B cell (primary cell): ENCODE measurements at regions of chr7 and their contacts with region 1.

Region 1: GRCh38 chr7:41940760-41941343 is 238.0 kb upstream of the INHBA start:
- DNase-seq: peak; percentile 80
- ATAC-seq: peak; percentile 73
- H3K4me3 ChIP-seq: no peak overlapping the region
- H3K4me3 Mint-ChIP-seq: peak overlapping the region; percentile 68
- H3K27ac ChIP-seq: no peak overlapping the region
- H3K27ac Mint-ChIP-seq: no peak overlapping the region
- H3K4me1 ChIP-seq: peaks cover 17 to 24% of the 10 kb centered on the region in 2 donors
- H3K4me1 Mint-ChIP-seq: peaks cover 27% of the 10 kb centered on the region
- H3K27me3 ChIP-seq: peaks cover 0 to 4% (median 0%) of the 10 kb centered on the region in 4 experiments
- H3K27me3 Mint-ChIP-seq: peaks cover 9% of the 10 kb centered on the region
- CTCF ChIP-seq: peak; percentile 91

Region 2: DNA sequence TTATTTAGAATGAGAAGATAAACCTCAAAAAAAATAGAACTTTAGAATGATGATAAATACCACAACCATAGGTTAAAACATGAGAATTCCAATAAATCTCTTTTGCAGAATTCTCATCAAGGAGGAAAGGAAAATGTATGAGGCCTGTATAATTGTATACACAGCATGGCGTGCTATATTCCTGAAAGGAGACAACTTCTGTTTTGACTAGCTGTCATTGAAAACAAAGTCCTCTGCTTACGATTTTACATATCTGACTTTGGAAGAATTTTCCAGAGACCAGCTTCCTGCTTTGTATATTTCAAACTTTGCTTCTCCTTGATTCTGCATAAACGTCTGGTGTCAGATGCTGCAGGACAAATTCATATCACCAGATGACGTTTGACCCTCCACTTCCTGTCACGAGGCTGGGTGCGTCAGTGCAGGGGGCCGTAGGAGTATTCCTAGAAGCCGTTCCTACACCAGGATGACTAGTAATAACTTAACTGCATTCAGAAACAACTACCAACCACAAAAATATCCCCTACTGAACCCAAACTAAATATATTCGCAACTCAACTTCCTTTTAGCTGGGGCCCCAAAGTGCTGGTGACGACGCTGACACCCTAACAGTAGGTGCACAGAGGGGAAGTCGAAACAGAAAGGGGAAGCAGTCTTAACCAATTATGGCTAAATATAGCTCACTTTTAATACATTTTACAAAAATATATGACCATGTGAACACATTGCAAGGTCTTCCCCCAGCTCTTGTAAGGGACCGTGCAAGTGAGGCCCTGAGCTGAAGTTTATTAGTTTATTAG is 59.3 kb before region 1 on chr7:
- CTCF ChIA-PET with region 1: interaction called, 13 read pairs
- POLR2A ChIA-PET with region 1: no interaction called
- intact Hi-C with region 1: loop called (anchors 1 kb)
- DNase-seq: peak; percentile 96
- ATAC-seq: peak; percentile 89
- H3K4me3 ChIP-seq: peak overlapping the region in 1 of 5 experiments; percentile 41
- H3K4me3 Mint-ChIP-seq: peak overlapping the region; percentile 84
- H3K27ac ChIP-seq: peak overlapping the region; percentile 87 to 91
- H3K27ac Mint-ChIP-seq: peak overlapping the region; percentile 93
- H3K4me1 ChIP-seq: peaks cover 57 to 63% of the 10 kb centered on the region in 2 donors
- H3K4me1 Mint-ChIP-seq: peaks cover 71% of the 10 kb centered on the region
- H3K27me3 ChIP-seq: no peaks in the 10 kb centered on the region
- H3K27me3 Mint-ChIP-seq: no peaks in the 10 kb centered on the region
- CTCF ChIP-seq: no peak

Region 3: GRCh38 chr7:41930538-41931262 is 10.2 kb before region 1 on chr7:
- CTCF ChIA-PET with region 1: interaction called, 54 read pairs
- POLR2A ChIA-PET with region 1: no interaction called
- intact Hi-C with region 1: no loop called
- DNase-seq: no peak
- ATAC-seq: no peak
- H3K4me3 ChIP-seq: no peak overlapping the region
- H3K4me3 Mint-ChIP-seq: no peak overlapping the region
- H3K27ac ChIP-seq: no peak overlapping the region
- H3K27ac Mint-ChIP-seq: no peak overlapping the region
- H3K4me1 ChIP-seq: peaks cover 10 to 15% of the 10 kb centered on the region in 2 donors
- H3K4me1 Mint-ChIP-seq: peaks cover 22% of the 10 kb centered on the region
- H3K27me3 ChIP-seq: no peaks in the 10 kb centered on the region
- H3K27me3 Mint-ChIP-seq: peaks cover 6% of the 10 kb centered on the region
- CTCF ChIP-seq: no peak

Region 4: GRCh38 chr7:41977151-41977651 is 36.3 kb after region 1 on chr7:
- CTCF ChIA-PET with region 1: interaction called, 11 read pairs
- POLR2A ChIA-PET with region 1: no interaction called
- intact Hi-C with region 1: no loop called
- DNase-seq: peak; percentile 21
- ATAC-seq: no peak
- H3K4me3 ChIP-seq: no peak overlapping the region
- H3K4me3 Mint-ChIP-seq: no peak overlapping the region
- H3K27ac ChIP-seq: no peak overlapping the region
- H3K27ac Mint-ChIP-seq: no peak overlapping the region
- H3K4me1 ChIP-seq: no peaks in the 10 kb centered on the region
- H3K4me1 Mint-ChIP-seq: no peaks in the 10 kb centered on the region
- H3K27me3 ChIP-seq: peaks cover 0 to 4% (median 2%) of the 10 kb centered on the region in 4 experiments
- H3K27me3 Mint-ChIP-seq: peaks cover 13% of the 10 kb centered on the region
- CTCF ChIP-seq: peak; percentile 35

Region 5: DNA sequence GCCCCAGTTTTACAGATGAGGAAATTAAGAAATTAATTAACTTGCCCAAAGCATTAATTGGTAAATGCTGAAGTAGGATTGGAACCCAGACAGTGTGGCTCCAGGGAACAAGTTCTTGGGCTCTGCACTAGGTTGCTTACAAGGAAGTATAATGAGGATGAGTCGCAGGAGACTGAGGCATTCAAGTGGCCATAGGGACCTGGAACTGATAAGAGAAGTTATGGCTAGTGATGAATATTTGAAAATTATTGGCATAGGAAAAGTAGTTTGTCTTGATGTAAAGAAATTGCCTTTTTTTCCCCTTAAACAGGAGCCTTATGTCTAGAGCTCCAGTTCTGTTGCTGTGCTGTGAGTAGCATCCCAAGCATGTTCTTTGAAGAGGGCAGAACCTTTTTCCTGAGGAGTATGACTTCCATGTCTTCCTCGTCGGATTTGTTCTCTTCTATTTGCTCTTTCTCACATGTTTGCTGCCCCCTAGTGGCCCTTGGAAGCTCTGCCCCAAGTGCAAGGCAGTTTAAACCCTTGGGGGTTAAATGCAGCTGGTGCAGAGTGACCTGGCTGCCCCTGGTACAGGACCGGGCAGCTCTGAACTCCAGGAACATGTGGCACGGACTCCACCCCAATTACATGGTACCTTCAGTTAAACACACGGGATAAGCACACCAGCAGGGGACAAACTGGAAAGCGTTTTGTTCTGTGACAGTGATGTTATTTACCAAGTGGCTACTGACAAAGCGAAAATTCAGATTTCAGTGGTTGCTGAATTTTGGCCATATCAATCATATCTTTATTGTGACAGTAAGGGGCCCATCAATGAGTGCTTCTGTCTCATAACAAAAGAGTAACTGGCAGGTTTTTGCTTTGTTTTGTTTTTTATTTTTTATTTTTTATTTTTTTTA is 1320.4 kb after region 1 on chr7:
- CTCF ChIA-PET with region 1: interaction called, 7 read pairs
- POLR2A ChIA-PET with region 1: no interaction called
- intact Hi-C with region 1: loop called (anchors 2 kb)
- DNase-seq: peak; percentile 70
- ATAC-seq: peak; percentile 53
- H3K4me3 ChIP-seq: no peak overlapping the region
- H3K4me3 Mint-ChIP-seq: no peak overlapping the region
- H3K27ac ChIP-seq: no peak overlapping the region
- H3K27ac Mint-ChIP-seq: no peak overlapping the region
- H3K4me1 ChIP-seq: no peaks in the 10 kb centered on the region
- H3K4me1 Mint-ChIP-seq: no peaks in the 10 kb centered on the region
- H3K27me3 ChIP-seq: peaks cover 0 to 2% (median 0%) of the 10 kb centered on the region in 4 experiments
- H3K27me3 Mint-ChIP-seq: peaks cover 8% of the 10 kb centered on the region
- CTCF ChIP-seq: peak; percentile 98

Region 6: GRCh38 chr7:43834463-43835251 is 1893.8 kb after region 1 on chr7:
- CTCF ChIA-PET with region 1: interaction called, 4 read pairs
- POLR2A ChIA-PET with region 1: no interaction called
- intact Hi-C with region 1: loop called (anchors 1 kb)
- DNase-seq: peak; percentile 72
- ATAC-seq: peak; percentile 46
- H3K4me3 ChIP-seq: peak overlapping the region in 4 of 5 experiments; percentile 35 to 68 (median 50)
- H3K4me3 Mint-ChIP-seq: peak overlapping the region; percentile 93
- H3K27ac ChIP-seq: no peak overlapping the region
- H3K27ac Mint-ChIP-seq: peak overlapping the region; percentile 92
- H3K4me1 ChIP-seq: peaks cover 13 to 14% of the 10 kb centered on the region in 2 donors
- H3K4me1 Mint-ChIP-seq: peaks cover 18% of the 10 kb centered on the region
- H3K27me3 ChIP-seq: no peaks in the 10 kb centered on the region
- H3K27me3 Mint-ChIP-seq: peaks cover under 1% of the 10 kb centered on the region
- CTCF ChIP-seq: no peak